Spleen (tissue), 13 donors: ENCODE measurements at regions of chr1 and their contacts with region 1.

Region 1: DNA sequence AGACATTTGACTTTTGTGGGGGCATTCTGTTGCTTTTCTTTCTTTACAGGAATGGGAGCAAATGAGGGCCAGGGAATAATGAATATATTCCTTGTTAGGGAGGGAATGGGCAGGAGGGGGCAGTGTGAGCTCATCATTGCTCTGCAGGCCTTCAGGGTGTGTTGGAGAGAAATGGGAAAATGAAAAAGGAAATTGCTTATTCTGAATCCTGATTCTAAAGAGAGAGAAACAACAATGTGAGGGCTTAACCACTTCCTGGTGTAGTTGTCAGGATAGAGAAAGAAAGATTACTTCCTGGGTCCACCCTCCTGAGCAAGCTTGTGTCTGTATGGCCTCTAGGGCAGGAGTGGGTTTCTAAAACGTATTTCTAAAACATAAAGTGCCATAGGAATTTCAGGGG is 28.3 kb downstream of the VANGL2 start:
- DNase-seq: no peak
- H3K4me3 ChIP-seq: no peak overlapping the region
- H3K27ac ChIP-seq: peak overlapping the region; percentile 78 to 94 (median 83)
- H3K4me1 ChIP-seq: peaks cover 18 to 61% (median 51%) of the 10 kb centered on the region in 6 donors
- H3K27me3 ChIP-seq: no peaks in the 10 kb centered on the region
- CTCF ChIP-seq: peak; percentile 40 to 80 (median 70)
- POLR2A ChIP-seq: no peak

Region 2: GRCh38 chr1:159548126-159548525 is 880.5 kb before region 1 on chr1:
- intact Hi-C with region 1: no loop called
- DNase-seq: no peak
- H3K4me3 ChIP-seq: no peak overlapping the region
- H3K27ac ChIP-seq: no peak overlapping the region
- H3K4me1 ChIP-seq: no peaks in the 10 kb centered on the region
- H3K27me3 ChIP-seq: peaks cover 0 to 10% (median 0%) of the 10 kb centered on the region in 7 donors
- CTCF ChIP-seq: no peak
- POLR2A ChIP-seq: no peak

Region 3: DNA sequence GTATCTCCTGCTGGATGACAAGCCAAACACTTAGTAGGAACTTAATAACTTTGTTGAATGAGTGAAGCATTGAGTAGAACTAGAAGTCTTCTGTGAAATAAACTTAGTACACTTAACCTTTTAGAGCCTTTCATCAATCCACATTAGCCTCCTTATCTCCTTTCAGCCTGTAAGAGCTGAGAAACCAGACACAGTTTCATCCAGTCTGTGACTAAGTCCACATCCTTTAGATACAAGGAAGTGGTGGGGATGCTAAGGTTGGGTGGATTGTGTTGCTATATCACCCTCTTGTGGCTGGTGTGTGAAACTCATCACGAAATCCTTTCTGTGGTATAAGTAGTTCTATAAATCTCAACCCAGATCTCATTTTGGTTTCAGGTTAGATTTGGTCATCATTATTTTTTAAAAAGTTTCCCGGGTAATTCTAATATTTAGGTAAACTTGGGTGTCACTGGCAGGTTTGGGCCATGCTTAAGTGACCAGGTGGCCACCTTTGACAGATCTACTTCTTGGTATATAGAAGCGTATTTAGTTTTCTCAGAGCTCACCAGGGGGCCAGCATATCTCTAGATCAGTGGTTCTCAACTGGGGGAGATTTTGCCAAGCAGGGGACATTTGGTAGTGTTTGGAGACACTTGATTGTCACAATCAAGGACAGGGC is 178.5 kb after region 1 on chr1:
- intact Hi-C with region 1: loop called (anchors 2 kb)
- DNase-seq: no peak
- H3K4me3 ChIP-seq: no peak overlapping the region
- H3K27ac ChIP-seq: peak overlapping the region in 6 of 8 donors; percentile 8 to 57 (median 37)
- H3K4me1 ChIP-seq: peaks cover 0 to 60% (median 16%) of the 10 kb centered on the region in 6 donors
- H3K27me3 ChIP-seq: no peaks in the 10 kb centered on the region
- CTCF ChIP-seq: peak; percentile 65 to 86 (median 84)
- POLR2A ChIP-seq: no peak